Breast epithelium (tissue), 4 donors: ENCODE measurements at regions of chr10 and their contacts with region 1.

Region 1: GRCh38 chr10:130483691-130484466 is 347.7 kb downstream of the GLRX3 start:
- DNase-seq: peak in 1 of 2 donors; percentile 49
- H3K4me3 ChIP-seq: no peak overlapping the region
- H3K27ac ChIP-seq: no peak overlapping the region
- H3K4me1 ChIP-seq: no peaks in the 10 kb centered on the region
- H3K27me3 ChIP-seq: peaks cover 0 to 45% of the 10 kb centered on the region in 2 donors
- CTCF ChIP-seq: no peak
- POLR2A ChIP-seq: no peak

Region 2: DNA sequence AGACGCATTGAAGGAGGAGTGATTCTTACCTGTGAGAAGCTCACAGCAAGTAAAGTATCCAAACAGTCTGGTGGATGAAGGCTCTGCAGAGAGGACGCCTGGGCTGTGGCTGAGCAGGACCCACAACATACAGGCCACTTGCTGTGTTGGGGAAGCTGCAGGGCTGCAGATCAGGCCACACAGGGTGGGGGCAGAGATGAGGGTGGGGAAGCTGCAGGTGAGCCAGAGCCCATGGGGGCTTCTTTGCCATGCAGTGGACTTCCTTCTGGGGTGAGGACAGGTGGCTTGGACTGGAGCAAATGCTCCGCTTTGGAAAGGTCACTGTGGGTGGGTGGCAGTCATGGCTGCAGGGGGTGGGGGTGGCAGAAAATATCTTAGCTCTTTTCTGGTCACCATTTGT is 132.9 kb before region 1 on chr10:
- intact Hi-C with region 1: no loop called
- DNase-seq: no peak
- H3K4me3 ChIP-seq: no peak overlapping the region
- H3K27ac ChIP-seq: no peak overlapping the region
- H3K4me1 ChIP-seq: no peaks in the 10 kb centered on the region
- H3K27me3 ChIP-seq: peaks cover 0 to 12% of the 10 kb centered on the region in 2 donors
- CTCF ChIP-seq: no peak
- POLR2A ChIP-seq: no peak

Region 3: GRCh38 chr10:131013261-131013912 is 529.5 kb after region 1 on chr10:
- intact Hi-C with region 1: loop called (anchors 5 kb)
- DNase-seq: no peak
- H3K4me3 ChIP-seq: no peak overlapping the region
- H3K27ac ChIP-seq: no peak overlapping the region
- H3K4me1 ChIP-seq: no peaks in the 10 kb centered on the region
- H3K27me3 ChIP-seq: peaks cover 0 to 7% of the 10 kb centered on the region in 2 donors
- CTCF ChIP-seq: no peak
- POLR2A ChIP-seq: no peak